A673 (cell line): ENCODE measurements at regions of chr11 and their contacts with region 1.

Region 1: DNA sequence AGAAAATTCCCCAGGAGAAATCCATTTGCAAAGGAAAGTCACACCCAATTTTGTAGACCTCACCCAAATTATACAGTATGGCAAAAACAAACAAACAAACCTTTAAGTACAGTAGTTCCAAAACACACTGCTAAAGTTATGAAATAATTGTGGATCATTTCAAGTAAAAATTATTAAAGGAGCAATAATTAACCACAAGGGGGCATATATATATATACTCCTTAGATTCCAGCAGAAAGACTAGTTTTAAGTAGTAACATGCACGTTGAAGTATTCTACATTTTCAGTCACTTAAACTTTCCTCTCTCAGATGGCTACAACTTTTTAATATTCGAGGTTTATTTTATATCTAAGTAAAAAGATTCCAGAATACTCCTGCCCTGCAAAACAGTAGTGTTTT is 26.8 kb downstream of the RNF141 start:
- DNase-seq: peak; percentile 36
- H3K4me3 ChIP-seq: no peak overlapping the region
- H3K27ac ChIP-seq: peak overlapping the region; percentile 43
- H3K4me1 ChIP-seq: peaks cover 34% of the 10 kb centered on the region
- H3K27me3 ChIP-seq: no peaks in the 10 kb centered on the region
- CTCF ChIP-seq: peak; percentile 46

Region 2: DNA sequence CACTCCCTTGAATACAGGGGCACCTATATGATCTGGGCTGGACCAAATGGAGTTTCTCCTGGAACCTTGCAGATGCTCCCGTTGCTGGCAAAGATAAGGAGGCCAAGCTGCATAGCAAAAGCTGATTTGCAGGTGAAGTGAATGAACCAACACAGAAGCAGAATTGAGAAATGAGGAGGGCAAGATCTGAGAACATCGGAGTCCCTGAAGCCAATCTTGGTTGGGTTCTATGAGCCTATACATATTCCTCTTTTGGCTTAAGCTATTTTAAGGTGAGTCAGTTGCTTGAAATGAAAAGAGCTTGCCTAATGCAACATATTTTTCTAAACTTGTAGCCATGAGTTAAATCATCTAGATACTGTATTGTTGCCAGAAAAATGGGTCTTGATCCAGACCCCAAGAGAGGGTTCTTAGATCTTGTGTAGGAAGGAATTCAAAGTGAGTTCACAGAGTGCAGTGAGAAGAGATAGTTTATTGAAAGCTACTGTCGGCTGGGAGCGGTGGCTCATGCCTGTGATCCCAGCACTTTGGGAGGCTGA is 917.2 kb before region 1 on chr11:
- CTCF ChIA-PET with region 1: no interaction called
- POLR2A ChIA-PET with region 1: interaction called, 11 read pairs
- intact Hi-C with region 1: no loop called
- DNase-seq: no peak
- H3K4me3 ChIP-seq: no peak overlapping the region
- H3K27ac ChIP-seq: no peak overlapping the region
- H3K4me1 ChIP-seq: peaks cover 7% of the 10 kb centered on the region
- H3K27me3 ChIP-seq: no peaks in the 10 kb centered on the region
- CTCF ChIP-seq: no peak

Region 3: DNA sequence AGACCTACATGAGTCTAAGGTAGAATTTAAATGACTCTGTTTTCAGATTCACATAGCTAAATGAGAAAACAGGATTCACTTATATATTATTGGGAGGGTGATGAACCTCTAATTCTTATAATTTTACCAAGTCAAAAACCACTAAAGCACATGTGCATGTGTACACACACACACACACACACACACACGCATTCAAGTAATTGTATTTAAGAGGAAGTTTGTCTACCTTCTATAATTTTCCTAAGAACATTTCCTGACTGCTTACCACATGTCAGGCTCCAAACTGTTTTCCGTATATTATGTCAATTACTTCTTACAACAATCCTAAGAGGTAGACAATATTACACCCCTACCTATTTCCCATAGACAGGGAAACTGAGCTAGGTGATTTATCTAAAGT is 20.1 kb after region 1 on chr11:
- CTCF ChIA-PET with region 1: no interaction called
- POLR2A ChIA-PET with region 1: interaction called, 11 read pairs
- intact Hi-C with region 1: no loop called
- DNase-seq: no peak
- H3K4me3 ChIP-seq: no peak overlapping the region
- H3K27ac ChIP-seq: no peak overlapping the region
- H3K4me1 ChIP-seq: peaks cover 29% of the 10 kb centered on the region
- H3K27me3 ChIP-seq: no peaks in the 10 kb centered on the region
- CTCF ChIP-seq: no peak

Region 4: DNA sequence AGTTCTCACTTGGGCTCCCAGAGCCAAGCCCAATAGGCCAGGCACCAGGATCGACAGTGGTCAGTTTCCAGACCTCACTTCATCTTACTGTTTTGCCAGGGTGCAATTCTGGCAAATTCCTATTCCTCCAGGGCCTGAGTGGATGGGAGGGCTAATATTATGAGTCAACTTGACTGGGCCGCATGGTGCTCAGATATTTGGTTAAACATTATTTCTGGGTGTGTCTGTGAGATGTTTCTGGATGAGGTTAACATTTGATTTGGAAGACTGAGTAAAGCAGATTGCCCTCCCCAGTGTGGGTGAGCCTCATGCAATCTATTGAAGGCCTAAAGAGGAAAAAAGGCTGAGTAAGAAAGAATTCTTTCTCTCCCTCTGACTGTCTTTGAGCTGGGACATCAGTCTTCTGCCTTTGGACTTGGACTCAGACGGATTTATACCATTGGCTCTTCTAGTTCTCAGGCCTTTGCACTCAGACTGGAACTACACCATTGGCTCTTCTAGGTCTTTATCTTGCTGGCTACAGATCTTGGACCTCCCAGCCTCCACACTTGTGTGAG is 476.5 kb after region 1 on chr11:
- CTCF ChIA-PET with region 1: no interaction called
- POLR2A ChIA-PET with region 1: no interaction called
- intact Hi-C with region 1: no loop called
- DNase-seq: no peak
- H3K4me3 ChIP-seq: no peak overlapping the region
- H3K27ac ChIP-seq: no peak overlapping the region
- H3K4me1 ChIP-seq: no peaks in the 10 kb centered on the region
- H3K27me3 ChIP-seq: no peaks in the 10 kb centered on the region
- CTCF ChIP-seq: no peak

Region 5: DNA sequence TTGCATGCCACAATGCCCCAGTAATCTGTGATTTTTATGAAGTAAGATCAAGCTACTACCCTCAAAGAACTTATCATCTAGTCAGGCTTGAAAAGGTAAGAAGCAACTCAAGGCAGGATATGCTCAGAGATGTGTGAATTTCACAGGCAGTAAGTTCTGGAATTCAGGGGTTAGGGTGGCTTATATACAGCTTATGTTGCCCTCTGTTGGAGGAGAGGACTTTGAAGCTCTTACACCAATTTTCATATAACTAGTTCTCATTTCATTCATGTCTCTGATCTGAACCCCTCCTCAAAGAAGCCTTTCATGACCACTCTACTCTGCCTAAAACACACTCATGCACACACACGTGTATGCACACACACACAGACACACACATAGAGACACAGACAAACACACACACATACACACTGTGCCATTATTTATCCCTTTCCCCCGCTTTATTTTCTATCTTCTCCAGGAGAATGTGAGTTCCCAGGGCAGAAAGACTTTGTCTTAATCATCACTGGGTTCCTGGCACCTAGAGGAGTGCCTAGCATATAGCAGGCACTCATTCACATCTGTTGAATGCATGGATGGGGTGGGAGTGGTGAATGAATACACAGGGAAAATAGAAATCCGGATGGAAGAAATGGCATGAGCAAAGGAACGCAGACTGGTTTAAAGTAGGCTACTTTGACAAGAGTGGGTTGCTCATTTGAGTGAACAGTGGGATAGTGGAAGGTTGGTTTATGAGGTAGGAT is 564.3 kb after region 1 on chr11:
- CTCF ChIA-PET with region 1: no interaction called
- POLR2A ChIA-PET with region 1: no interaction called
- intact Hi-C with region 1: no loop called
- DNase-seq: no peak
- H3K4me3 ChIP-seq: no peak overlapping the region
- H3K27ac ChIP-seq: no peak overlapping the region
- H3K4me1 ChIP-seq: no peaks in the 10 kb centered on the region
- H3K27me3 ChIP-seq: no peaks in the 10 kb centered on the region
- CTCF ChIP-seq: 0 out of 2 replicates have a peak, but pooled peaks have one; percentile 11